ENCODE measurements at regions of chr6 and their contacts with region 1.

Region 1: DNA sequence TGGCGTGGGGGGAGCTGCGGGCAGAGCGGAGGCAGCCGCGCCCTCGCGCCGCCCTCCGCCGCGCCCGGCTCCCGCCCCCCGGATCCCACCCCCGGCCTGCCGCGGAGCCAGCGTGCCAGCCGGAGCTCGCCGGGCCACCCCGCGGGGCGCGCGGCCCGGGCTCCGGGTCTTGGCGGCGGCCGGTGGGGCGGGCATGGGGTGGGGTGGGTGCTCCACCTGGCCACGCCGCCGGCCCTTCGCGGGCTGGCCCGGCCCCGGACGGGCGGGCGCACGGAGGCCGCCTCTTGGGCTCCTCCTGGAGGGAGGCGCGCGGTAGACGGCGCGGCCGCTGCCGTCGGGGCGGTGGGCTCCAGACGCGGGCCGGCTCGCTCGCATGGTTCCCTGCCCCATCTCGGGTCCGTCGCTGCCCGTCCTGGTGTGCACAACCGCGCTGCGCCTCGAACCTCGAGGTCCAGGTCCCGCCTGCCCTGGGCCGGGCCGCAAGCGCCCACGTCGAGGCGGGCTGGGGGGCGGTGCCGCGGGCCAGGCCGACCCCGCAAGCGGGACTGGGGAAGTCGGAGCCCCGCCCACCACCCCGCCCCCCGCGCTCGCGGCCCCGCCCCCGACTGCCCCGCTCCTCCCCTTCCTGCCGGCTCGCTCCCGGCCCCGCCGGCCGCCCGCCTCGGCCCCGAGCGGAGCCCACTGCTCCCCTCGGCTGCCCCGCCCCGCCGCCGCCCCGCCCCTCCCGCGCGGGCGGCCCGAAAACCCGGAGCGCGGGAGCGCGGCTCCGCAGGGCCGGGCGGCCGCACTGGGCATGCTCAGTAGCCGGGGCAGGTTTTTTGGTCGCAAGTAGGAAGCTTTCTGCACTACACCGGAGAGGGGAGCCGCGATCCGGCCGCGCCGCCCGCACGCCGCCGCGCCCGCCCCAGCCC is at the start of gene CDYL:
- DNase-seq: peak; percentile 89 to 96 (median 95)
- ATAC-seq: peak; percentile 92 to 95
- H3K4me3 ChIP-seq: peak within 1 kb of the TSS; percentile 100
- H3K27ac ChIP-seq: peak within 1 kb of the TSS; percentile 88
- H3K4me1 ChIP-seq: no peaks in the 10 kb centered on the region
- H3K27me3 ChIP-seq: no peaks in the 10 kb centered on the region
- total RNA-seq, gene CDYL: 33.5 to 42.0 (median 36.1) TPM

Region 2: GRCh38 chr6:4647414-4648365 is 128.1 kb before region 1 on chr6:
- intact Hi-C with region 1: loop called in 2 of 4 experiments (anchors 5 to 10 kb)
- DNase-seq: peak; percentile 81 to 91 (median 89)
- ATAC-seq: peak; percentile 98
- H3K4me3 ChIP-seq: peak overlapping the region; percentile 23
- H3K27ac ChIP-seq: no peak overlapping the region
- H3K4me1 ChIP-seq: peaks cover 4% of the 10 kb centered on the region
- H3K27me3 ChIP-seq: no peaks in the 10 kb centered on the region

Region 3: DNA sequence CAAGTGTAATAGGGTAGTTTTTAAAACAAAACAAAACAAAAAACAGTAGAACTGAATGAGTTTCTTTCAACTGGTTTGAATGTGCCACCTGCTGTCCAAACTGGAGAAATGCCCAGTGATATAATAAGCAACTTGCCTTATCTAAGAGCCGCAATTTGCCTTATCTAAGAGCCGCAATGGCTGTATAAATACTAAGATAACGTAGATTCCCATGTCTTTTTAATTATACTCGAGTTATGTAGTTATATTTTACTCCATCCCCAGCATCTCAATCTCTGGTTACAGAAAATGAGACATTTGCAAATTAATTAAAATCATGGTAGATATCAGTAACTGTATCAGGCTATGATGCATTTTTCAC is 160.8 kb after region 1 on chr6:
- intact Hi-C with region 1: loop called in 1 of 4 experiments (anchors 10 kb)
- DNase-seq: no peak
- ATAC-seq: peak in 1 of 2 donors; percentile 42
- H3K4me3 ChIP-seq: no peak overlapping the region
- H3K27ac ChIP-seq: no peak overlapping the region
- H3K4me1 ChIP-seq: peaks cover 8% of the 10 kb centered on the region
- H3K27me3 ChIP-seq: no peaks in the 10 kb centered on the region